Caco-2 (cell line): ENCODE measurements at regions of chr5 and their contacts with region 1.

Region 1: GRCh38 chr5:76867827-76868693 is 18.2 kb downstream of the S100Z start:
- DNase-seq: peak; percentile 66 to 84
- H3K4me3 ChIP-seq: no peak overlapping the region
- H3K4me3 Mint-ChIP-seq: no peak overlapping the region
- H3K27ac Mint-ChIP-seq: no peak overlapping the region
- H3K4me1 ChIP-seq: peaks cover 31% of the 10 kb centered on the region
- H3K4me1 Mint-ChIP-seq: peaks cover 20% of the 10 kb centered on the region
- H3K27me3 ChIP-seq: no peaks in the 10 kb centered on the region
- H3K27me3 Mint-ChIP-seq: no peaks in the 10 kb centered on the region
- CTCF ChIP-seq: peak; percentile 74 to 82

Region 2: GRCh38 chr5:76855961-76856360 is 12.1 kb before region 1 on chr5:
- CTCF ChIA-PET with region 1: no interaction called
- POLR2A ChIA-PET with region 1: no interaction called
- intact Hi-C with region 1: no loop called
- DNase-seq: no peak
- H3K4me3 ChIP-seq: no peak overlapping the region
- H3K4me3 Mint-ChIP-seq: no peak overlapping the region
- H3K27ac Mint-ChIP-seq: no peak overlapping the region
- H3K4me1 ChIP-seq: peaks cover 28% of the 10 kb centered on the region
- H3K4me1 Mint-ChIP-seq: peaks cover 34% of the 10 kb centered on the region
- H3K27me3 ChIP-seq: no peaks in the 10 kb centered on the region
- H3K27me3 Mint-ChIP-seq: no peaks in the 10 kb centered on the region
- CTCF ChIP-seq: no peak

Region 3: DNA sequence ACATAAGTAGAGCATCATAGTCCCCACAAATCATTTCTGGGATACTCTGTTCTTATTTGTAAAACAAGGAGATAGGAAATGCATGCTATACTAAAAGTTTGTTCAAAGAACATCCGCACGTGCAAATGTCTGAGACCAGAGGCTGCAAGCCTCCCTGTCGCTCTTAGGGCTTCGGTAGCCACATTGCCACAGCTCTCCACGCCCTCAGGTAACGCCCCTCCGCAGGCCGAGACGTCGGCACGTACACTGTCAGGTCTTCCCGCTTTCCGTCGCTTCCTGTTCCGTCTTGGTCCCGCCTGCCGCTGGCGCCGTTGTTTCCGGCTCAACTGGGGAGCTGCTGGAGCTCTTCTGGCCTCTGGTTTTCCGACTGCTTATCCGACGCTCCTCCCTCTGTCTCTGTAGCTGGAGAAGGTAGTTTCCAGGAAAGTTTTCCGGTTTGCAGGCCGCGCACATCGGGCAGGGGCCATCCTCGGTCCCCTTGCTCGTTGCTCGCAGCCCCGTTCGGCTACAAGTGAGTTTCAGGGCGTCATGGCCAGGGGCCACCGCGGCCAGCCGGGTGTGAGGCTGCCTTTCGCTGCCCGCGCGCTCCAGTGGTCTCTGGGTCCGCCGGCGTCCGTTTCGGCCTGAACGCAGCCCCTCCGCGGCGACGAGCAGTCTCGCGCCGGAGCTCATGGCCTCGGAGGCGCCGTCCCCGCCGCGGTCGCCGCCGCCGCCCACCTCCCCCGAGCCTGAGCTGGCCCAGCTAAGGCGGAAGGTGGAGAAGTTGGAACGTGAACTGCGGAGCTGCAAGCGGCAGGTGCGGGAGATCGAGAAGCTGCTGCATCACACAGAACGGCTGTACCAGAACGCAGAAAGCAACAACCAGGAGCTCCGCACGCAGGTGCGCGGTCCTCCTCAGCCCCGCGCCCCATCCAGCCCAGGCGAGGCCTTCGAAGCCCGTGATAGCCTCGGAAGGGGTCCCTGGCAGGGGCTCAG is 162.3 kb after region 1 on chr5 and contains the start of gene AGGF1:
- CTCF ChIA-PET with region 1: interaction called, 5 read pairs
- POLR2A ChIA-PET with region 1: interaction called, 4 read pairs
- intact Hi-C with region 1: loop called (anchors 5 kb)
- DNase-seq: peak; percentile 93 to 96
- H3K4me3 ChIP-seq: peak within 1 kb of the TSS; percentile 68
- H3K4me3 Mint-ChIP-seq: peak within 1 kb of the TSS; percentile 88
- H3K27ac Mint-ChIP-seq: peak within 1 kb of the TSS; percentile 78
- H3K4me1 ChIP-seq: 0 out of 2 replicates have a peak, but pooled peaks cover 9% of the 10 kb centered on the region
- H3K4me1 Mint-ChIP-seq: no peaks in the 10 kb centered on the region
- H3K27me3 ChIP-seq: no peaks in the 10 kb centered on the region
- H3K27me3 Mint-ChIP-seq: no peaks in the 10 kb centered on the region
- CTCF ChIP-seq: no peak
- total RNA-seq, gene AGGF1: 20.2 and 28.6 TPM in 2 replicates

Region 4: DNA sequence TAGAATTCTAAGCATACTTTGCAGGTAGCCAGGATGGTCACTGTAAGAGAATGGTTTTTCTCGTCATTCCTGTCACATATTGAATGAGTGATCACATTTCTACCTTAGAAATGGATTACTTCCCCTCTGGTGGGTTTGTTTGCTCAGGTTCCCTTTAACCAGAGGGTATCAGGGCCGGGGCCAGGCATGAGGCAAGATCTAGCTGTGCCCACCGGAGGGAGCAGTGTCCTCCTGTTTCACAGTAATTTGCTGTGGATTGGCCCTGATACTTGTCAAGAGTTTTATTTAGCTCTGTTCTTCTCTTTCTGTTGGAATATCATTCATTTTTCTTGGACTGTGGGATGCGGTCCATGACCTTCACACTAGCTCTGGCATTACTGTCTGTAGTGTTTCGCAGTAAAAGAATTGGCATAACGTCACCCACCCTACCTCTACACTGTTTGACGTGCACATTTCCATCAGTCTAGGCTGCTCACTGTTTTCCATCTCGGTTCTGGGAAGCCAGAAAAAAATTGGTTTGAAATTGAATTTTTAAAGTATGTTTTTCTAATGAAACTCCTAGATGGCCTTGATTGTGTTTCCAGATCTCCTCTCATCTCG is 261.4 kb after region 1 on chr5:
- CTCF ChIA-PET with region 1: interaction called, 4 read pairs
- POLR2A ChIA-PET with region 1: no interaction called
- intact Hi-C with region 1: loop called (anchors 5 kb)
- DNase-seq: peak; percentile 50 to 63
- H3K4me3 ChIP-seq: no peak overlapping the region
- H3K4me3 Mint-ChIP-seq: no peak overlapping the region
- H3K27ac Mint-ChIP-seq: no peak overlapping the region
- H3K4me1 ChIP-seq: no peaks in the 10 kb centered on the region
- H3K4me1 Mint-ChIP-seq: no peaks in the 10 kb centered on the region
- H3K27me3 ChIP-seq: no peaks in the 10 kb centered on the region
- H3K27me3 Mint-ChIP-seq: no peaks in the 10 kb centered on the region
- CTCF ChIP-seq: peak; percentile 59 to 63

Region 5: GRCh38 chr5:77437194-77437593 is 569.1 kb after region 1 on chr5:
- CTCF ChIA-PET with region 1: no interaction called
- POLR2A ChIA-PET with region 1: no interaction called
- intact Hi-C with region 1: loop called (anchors 5 kb)
- DNase-seq: peak in 1 of 2 experiments; percentile 59
- H3K4me3 ChIP-seq: no peak overlapping the region
- H3K4me3 Mint-ChIP-seq: no peak overlapping the region
- H3K27ac Mint-ChIP-seq: no peak overlapping the region
- H3K4me1 ChIP-seq: peaks cover 5% of the 10 kb centered on the region; the same call in 1 of the 2 replicates
- H3K4me1 Mint-ChIP-seq: peaks cover 7% of the 10 kb centered on the region
- H3K27me3 ChIP-seq: no peaks in the 10 kb centered on the region
- H3K27me3 Mint-ChIP-seq: no peaks in the 10 kb centered on the region
- CTCF ChIP-seq: peak; percentile 56 to 70